B cell (primary cell): ENCODE measurements at regions of chr17 and their contacts with region 1.

Region 1: GRCh38 chr17:65027305-65027704 is 29.2 kb downstream of the GNA13 start:
- DNase-seq: peak; percentile 57
- ATAC-seq: peak; percentile 42
- H3K4me3 ChIP-seq: no peak overlapping the region
- H3K4me3 Mint-ChIP-seq: peak overlapping the region; percentile 63
- H3K27ac ChIP-seq: peak overlapping the region; percentile 31 to 68
- H3K27ac Mint-ChIP-seq: peak overlapping the region; percentile 87
- H3K4me1 ChIP-seq: peaks cover 71 to 82% of the 10 kb centered on the region in 2 donors
- H3K4me1 Mint-ChIP-seq: peaks cover 89% of the 10 kb centered on the region
- H3K27me3 ChIP-seq: no peaks in the 10 kb centered on the region
- H3K27me3 Mint-ChIP-seq: no peaks in the 10 kb centered on the region
- CTCF ChIP-seq: peak; percentile 74

Region 2: GRCh38 chr17:64975329-64976087 is 51.8 kb before region 1 on chr17:
- CTCF ChIA-PET with region 1: interaction called, 3 read pairs
- POLR2A ChIA-PET with region 1: interaction called, 10 read pairs
- intact Hi-C with region 1: no loop called
- DNase-seq: peak; percentile 100
- ATAC-seq: peak; percentile 74
- H3K4me3 ChIP-seq: peak overlapping the region in 4 of 5 experiments; percentile 59 to 77 (median 68)
- H3K4me3 Mint-ChIP-seq: peak overlapping the region; percentile 92
- H3K27ac ChIP-seq: peak overlapping the region; percentile 95 to 99
- H3K27ac Mint-ChIP-seq: peak overlapping the region; percentile 99
- H3K4me1 ChIP-seq: peaks cover 28 to 34% of the 10 kb centered on the region in 2 donors
- H3K4me1 Mint-ChIP-seq: peaks cover 56% of the 10 kb centered on the region
- H3K27me3 ChIP-seq: no peaks in the 10 kb centered on the region
- H3K27me3 Mint-ChIP-seq: no peaks in the 10 kb centered on the region
- CTCF ChIP-seq: no peak

Region 3: GRCh38 chr17:64984851-64985521 is 42.3 kb before region 1 on chr17:
- CTCF ChIA-PET with region 1: interaction called, 7 read pairs
- POLR2A ChIA-PET with region 1: interaction called, 3 read pairs
- intact Hi-C with region 1: loop called (anchors 1 kb)
- DNase-seq: peak; percentile 44
- ATAC-seq: no peak
- H3K4me3 ChIP-seq: peak overlapping the region in 1 of 5 experiments; percentile 50
- H3K4me3 Mint-ChIP-seq: peak overlapping the region; percentile 81
- H3K27ac ChIP-seq: peak overlapping the region; percentile 99 to 100
- H3K27ac Mint-ChIP-seq: peak overlapping the region; percentile 99
- H3K4me1 ChIP-seq: peaks cover 33 to 49% of the 10 kb centered on the region in 2 donors
- H3K4me1 Mint-ChIP-seq: peaks cover 51% of the 10 kb centered on the region
- H3K27me3 ChIP-seq: no peaks in the 10 kb centered on the region
- H3K27me3 Mint-ChIP-seq: no peaks in the 10 kb centered on the region
- CTCF ChIP-seq: no peak

Region 4: GRCh38 chr17:65008882-65009281 is 18.4 kb before region 1 on chr17:
- CTCF ChIA-PET with region 1: interaction called, 3 read pairs
- POLR2A ChIA-PET with region 1: no interaction called
- intact Hi-C with region 1: loop called (anchors 2 kb)
- DNase-seq: no peak
- ATAC-seq: peak; percentile 21
- H3K4me3 ChIP-seq: no peak overlapping the region
- H3K4me3 Mint-ChIP-seq: no peak overlapping the region
- H3K27ac ChIP-seq: peak overlapping the region in 1 of 2 donors; percentile 36
- H3K27ac Mint-ChIP-seq: peak overlapping the region; percentile 52
- H3K4me1 ChIP-seq: peaks cover 32 to 42% of the 10 kb centered on the region in 2 donors
- H3K4me1 Mint-ChIP-seq: peaks cover 75% of the 10 kb centered on the region
- H3K27me3 ChIP-seq: no peaks in the 10 kb centered on the region
- H3K27me3 Mint-ChIP-seq: no peaks in the 10 kb centered on the region
- CTCF ChIP-seq: no peak

Region 5: GRCh38 chr17:65039336-65039988 is 12.2 kb after region 1 on chr17:
- CTCF ChIA-PET with region 1: interaction called, 5 read pairs
- POLR2A ChIA-PET with region 1: interaction called, 4 read pairs
- intact Hi-C with region 1: loop called (anchors 1 kb)
- DNase-seq: peak; percentile 83
- ATAC-seq: peak; percentile 78
- H3K4me3 ChIP-seq: no peak overlapping the region
- H3K4me3 Mint-ChIP-seq: peak overlapping the region; percentile 78
- H3K27ac ChIP-seq: peak overlapping the region; percentile 68 to 74
- H3K27ac Mint-ChIP-seq: peak overlapping the region; percentile 83
- H3K4me1 ChIP-seq: peaks cover 83 to 86% of the 10 kb centered on the region in 2 donors
- H3K4me1 Mint-ChIP-seq: peaks cover 82% of the 10 kb centered on the region
- H3K27me3 ChIP-seq: no peaks in the 10 kb centered on the region
- H3K27me3 Mint-ChIP-seq: no peaks in the 10 kb centered on the region
- CTCF ChIP-seq: no peak